ENCODE measurements at regions of chr19 and their contacts with region 1.

Region 1: DNA sequence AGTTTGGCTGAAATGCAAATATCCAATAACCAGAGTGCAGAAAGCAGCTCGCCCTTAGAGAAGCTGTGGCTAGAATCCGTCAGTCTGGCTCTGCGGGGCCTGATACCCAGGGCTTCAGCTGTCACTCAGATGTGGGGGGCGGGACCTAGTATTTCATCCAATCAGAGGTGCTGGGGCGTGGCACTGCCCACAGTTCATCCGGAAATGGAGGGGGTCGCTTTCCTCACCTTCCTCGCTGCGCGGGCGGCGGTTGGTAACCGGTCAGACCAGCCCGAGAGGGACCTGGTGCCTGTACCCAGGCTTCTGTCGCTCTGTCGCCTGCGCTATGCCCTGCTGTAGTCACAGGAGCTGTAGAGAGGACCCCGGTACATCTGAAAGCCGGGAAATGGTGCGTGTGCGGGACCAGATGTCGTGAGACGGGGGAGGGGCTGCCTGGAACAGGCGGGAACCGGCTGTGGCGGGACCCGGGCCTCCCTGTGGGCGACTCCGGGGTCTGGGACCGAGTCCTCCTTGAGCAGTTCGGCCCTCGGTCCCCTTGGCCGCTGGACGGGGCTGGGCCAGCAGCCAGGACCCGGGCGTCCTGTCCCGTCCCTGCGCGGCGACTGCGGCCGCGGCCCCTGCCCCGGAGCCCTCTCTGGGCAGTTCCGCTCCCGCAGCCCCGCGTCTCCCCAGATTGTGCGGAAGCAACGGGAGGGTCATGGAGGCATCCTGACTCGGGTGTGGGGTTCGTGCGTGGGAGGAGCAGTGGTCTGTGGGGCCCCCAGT is at the start of gene ZNF700:
- DNase-seq: peak; percentile 96
- total RNA-seq, gene ZNF700: 5.1 TPM

Region 2: DNA sequence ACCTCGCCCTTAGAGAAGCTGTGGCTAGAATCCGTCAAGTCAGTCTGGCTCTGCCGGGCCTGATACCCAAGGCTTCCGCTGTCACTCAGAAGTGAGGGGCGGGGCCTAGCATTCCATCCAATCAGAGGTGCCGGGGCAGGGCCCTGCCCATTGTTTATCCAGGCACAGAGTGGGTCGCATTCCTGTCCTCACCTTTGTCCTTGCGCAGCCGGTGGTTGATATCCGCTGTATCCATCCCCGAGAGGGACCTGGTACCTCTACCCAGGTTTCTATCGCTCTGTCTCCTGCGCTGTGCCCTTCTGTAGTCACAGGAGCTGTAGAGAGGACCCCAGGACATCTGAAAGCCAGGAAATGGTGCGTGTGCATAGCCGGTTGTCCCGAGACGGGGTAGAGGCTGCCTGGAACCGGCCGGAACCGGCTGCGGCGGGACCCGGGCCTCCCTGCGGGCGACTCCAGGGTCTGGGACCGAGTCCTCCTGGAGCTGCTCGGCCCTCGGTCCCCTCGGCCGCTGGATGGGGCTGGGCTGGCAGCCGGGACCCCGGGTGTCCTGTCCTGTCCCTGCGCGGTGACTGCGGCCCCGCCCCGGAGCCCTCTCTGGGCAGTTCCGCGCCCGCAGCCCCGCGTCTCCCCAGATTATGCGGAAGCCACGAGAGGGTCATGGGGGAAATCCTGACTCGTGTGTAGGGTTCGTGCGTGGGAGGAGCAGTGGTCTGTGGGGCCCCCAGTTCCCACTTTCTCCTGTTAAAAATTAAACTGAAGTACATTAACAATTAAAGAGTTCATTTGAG is 40.0 kb after region 1 on chr19 and contains the start of gene ZNF763:
- intact Hi-C with region 1: loop called (anchors 5 kb)
- DNase-seq: peak; percentile 97
- total RNA-seq, gene ZNF763: 3.1 TPM

Region 3: DNA sequence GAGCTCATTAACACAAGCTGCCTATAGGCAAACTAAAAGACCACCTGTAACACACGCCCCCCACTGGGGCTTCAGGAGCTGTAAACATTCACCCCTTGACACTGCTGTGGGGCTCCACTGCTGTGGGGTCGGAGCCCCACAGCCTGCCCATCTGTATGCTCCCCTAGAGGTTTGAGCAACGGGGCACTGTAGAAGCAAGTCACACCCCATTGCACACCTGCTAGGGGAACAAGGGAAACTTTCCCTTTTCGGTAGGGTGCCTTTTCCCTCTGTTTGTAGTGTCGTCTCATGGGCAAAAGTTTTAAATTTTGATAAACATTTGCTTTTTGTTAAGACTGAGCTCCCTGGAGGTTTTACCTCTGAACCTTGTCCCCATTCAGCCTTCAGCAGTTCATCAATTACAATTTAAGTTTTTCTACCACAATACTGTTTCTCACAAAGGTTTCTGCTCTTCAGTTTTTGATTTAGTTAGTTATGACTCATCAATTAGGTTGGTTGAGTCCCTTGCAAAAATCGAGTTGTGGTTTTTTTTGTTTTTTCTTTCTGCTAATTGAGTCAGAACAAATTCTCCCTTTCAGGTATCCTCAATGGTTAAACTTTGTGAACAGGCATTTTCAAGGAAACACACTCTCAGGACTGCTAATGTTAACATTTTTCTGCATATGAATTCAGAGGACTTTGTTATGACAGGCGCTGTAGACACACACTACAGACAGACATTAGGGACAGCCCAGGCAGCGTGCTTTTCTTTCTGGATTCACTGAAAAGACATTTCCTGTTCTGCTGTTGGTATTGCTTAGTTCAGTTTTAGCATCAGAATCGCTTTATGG is 75.3 kb after region 1 on chr19:
- intact Hi-C with region 1: no loop called
- DNase-seq: no peak